Natural killer cell (primary cell): ENCODE measurements at regions of chr1 and their contacts with region 1.

Region 1: GRCh38 chr1:231866392-231867331 is 240.1 kb downstream of the DISC1 start:
- DNase-seq: peak; percentile 43 to 83
- ATAC-seq: peak; percentile 59 to 72 (median 61)
- H3K4me3 ChIP-seq: no peak overlapping the region
- H3K4me3 Mint-ChIP-seq: no peak overlapping the region
- H3K27ac ChIP-seq: no peak overlapping the region
- H3K27ac Mint-ChIP-seq: peak overlapping the region in 1 of 2 donors; percentile 11
- H3K4me1 ChIP-seq: peaks cover 17% of the 10 kb centered on the region
- H3K4me1 Mint-ChIP-seq: peaks cover 34 to 40% of the 10 kb centered on the region in 2 donors
- H3K27me3 ChIP-seq: no peaks in the 10 kb centered on the region
- H3K27me3 Mint-ChIP-seq: no peaks in the 10 kb centered on the region
- CTCF ChIP-seq: peak; percentile 95

Region 2: DNA sequence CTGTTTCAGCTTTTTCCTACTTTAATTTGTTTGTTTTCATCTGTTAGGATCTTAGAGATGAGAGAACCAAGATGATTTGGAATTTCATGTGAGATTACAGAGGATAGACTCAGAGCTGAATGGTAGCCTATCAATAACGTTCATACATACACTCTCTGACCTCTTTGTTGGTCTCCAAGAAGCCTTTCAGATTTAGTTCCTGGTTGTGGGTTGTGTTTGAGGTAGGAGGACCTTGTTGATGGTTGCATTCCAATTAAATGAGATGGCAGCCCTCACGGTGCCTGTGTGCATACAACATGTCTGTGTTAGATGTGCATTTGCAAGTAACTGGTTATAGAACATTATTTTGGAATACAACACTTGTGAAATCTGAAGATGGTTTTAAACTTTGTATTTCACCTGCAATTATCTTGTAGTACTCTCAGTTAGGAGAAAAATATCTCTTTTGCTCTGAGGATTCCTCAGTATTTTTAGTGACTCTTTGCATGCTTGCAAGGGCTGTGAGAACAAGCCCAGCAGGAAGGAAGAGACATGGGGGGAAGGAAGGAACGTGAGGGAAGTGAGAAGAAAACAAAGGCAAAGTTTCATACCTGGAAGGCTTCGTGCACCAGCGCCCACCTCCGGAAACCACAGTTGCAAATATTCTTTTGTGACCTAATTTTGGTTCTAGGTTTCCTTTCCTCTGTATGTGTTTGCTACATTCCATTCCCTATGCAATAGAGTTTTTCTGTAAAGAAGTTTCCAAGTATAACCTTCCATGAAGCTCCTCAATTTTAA is 51.8 kb after region 1 on chr1:
- intact Hi-C with region 1: loop called (anchors 5 kb)
- DNase-seq: peak in 1 of 2 donors; percentile 63
- ATAC-seq: peak in 1 of 3 donors; percentile 12
- H3K4me3 ChIP-seq: no peak overlapping the region
- H3K4me3 Mint-ChIP-seq: peak overlapping the region; percentile 85
- H3K27ac ChIP-seq: peak overlapping the region; percentile 73
- H3K27ac Mint-ChIP-seq: peak overlapping the region; percentile 88 to 92
- H3K4me1 ChIP-seq: peaks cover 50% of the 10 kb centered on the region
- H3K4me1 Mint-ChIP-seq: peaks cover 52 to 62% of the 10 kb centered on the region in 2 donors
- H3K27me3 ChIP-seq: no peaks in the 10 kb centered on the region
- H3K27me3 Mint-ChIP-seq: no peaks in the 10 kb centered on the region
- CTCF ChIP-seq: no peak

Region 3: DNA sequence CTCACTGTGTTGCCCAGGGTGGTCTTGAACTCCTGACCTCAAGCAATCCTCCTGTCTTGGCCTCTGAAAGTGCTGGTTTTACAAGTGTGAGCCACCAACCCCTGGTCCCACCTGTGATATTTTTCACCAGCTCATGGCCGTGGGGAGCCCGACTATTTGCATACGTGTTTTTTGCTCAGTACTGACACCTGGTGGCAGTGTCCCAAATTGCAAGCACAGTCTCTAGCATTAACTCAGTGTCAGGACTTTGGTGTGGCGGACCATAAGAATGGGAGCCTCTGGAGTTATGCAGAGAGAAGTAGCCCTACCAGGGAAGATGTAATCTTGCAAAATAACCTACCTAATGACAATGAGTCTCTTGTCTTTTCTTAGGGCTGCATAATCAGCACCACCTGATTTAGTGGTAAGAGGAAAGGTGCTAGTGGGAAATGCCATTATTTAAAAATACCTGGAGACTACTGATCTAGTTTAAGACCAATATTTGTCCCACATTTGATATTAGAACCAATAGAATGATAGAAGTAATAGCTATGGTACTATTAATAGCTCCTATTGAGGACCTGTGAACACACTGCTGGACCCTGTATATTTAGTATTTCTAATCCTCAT is 65.3 kb after region 1 on chr1:
- intact Hi-C with region 1: loop called (anchors 5 kb)
- DNase-seq: peak; percentile 31 to 63
- ATAC-seq: peak in 1 of 3 donors; percentile 67
- H3K4me3 ChIP-seq: no peak overlapping the region
- H3K4me3 Mint-ChIP-seq: no peak overlapping the region
- H3K27ac ChIP-seq: no peak overlapping the region
- H3K27ac Mint-ChIP-seq: no peak overlapping the region
- H3K4me1 ChIP-seq: peaks cover 4% of the 10 kb centered on the region
- H3K4me1 Mint-ChIP-seq: peaks cover 8 to 9% of the 10 kb centered on the region in 2 donors
- H3K27me3 ChIP-seq: no peaks in the 10 kb centered on the region
- H3K27me3 Mint-ChIP-seq: no peaks in the 10 kb centered on the region
- CTCF ChIP-seq: peak; percentile 75

Region 4: GRCh38 chr1:231971397-231972104 is 104.9 kb after region 1 on chr1:
- intact Hi-C with region 1: loop called (anchors 10 kb)
- DNase-seq: no peak
- ATAC-seq: peak in 2 of 3 donors; percentile 46 to 53
- H3K4me3 ChIP-seq: no peak overlapping the region
- H3K4me3 Mint-ChIP-seq: peak overlapping the region; percentile 43
- H3K27ac ChIP-seq: no peak overlapping the region
- H3K27ac Mint-ChIP-seq: peak overlapping the region in 1 of 2 donors; percentile 10
- H3K4me1 ChIP-seq: peaks cover 12% of the 10 kb centered on the region
- H3K4me1 Mint-ChIP-seq: peaks cover 19 to 38% of the 10 kb centered on the region in 2 donors
- H3K27me3 ChIP-seq: no peaks in the 10 kb centered on the region
- H3K27me3 Mint-ChIP-seq: no peaks in the 10 kb centered on the region
- CTCF ChIP-seq: no peak

Region 5: DNA sequence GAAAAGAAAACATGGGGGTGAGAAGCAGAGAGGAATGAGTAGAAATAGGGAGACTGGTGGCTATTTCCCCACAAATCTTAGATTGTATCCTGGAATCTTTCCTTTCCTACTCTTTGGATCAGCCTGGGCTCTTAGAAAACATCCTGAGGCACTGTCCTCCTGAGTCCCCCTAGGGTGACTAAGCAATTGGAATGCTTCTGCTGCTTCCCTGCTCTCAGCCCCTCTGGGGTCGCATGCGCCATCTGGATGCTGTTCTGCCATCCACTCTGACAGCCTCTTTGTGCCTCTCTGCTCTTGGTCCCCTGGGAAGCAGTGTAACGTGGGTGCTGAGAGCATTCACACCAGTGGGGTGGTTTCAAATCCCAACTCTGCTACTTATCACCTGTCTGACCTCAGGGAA is 320.3 kb after region 1 on chr1:
- intact Hi-C with region 1: loop called (anchors 10 kb)
- DNase-seq: no peak
- ATAC-seq: no peak
- H3K4me3 ChIP-seq: no peak overlapping the region
- H3K4me3 Mint-ChIP-seq: no peak overlapping the region
- H3K27ac ChIP-seq: no peak overlapping the region
- H3K27ac Mint-ChIP-seq: no peak overlapping the region
- H3K4me1 ChIP-seq: no peaks in the 10 kb centered on the region
- H3K4me1 Mint-ChIP-seq: no peaks in the 10 kb centered on the region
- H3K27me3 ChIP-seq: no peaks in the 10 kb centered on the region
- H3K27me3 Mint-ChIP-seq: peaks cover 10 to 15% of the 10 kb centered on the region in 2 donors
- CTCF ChIP-seq: no peak

Region 6: DNA sequence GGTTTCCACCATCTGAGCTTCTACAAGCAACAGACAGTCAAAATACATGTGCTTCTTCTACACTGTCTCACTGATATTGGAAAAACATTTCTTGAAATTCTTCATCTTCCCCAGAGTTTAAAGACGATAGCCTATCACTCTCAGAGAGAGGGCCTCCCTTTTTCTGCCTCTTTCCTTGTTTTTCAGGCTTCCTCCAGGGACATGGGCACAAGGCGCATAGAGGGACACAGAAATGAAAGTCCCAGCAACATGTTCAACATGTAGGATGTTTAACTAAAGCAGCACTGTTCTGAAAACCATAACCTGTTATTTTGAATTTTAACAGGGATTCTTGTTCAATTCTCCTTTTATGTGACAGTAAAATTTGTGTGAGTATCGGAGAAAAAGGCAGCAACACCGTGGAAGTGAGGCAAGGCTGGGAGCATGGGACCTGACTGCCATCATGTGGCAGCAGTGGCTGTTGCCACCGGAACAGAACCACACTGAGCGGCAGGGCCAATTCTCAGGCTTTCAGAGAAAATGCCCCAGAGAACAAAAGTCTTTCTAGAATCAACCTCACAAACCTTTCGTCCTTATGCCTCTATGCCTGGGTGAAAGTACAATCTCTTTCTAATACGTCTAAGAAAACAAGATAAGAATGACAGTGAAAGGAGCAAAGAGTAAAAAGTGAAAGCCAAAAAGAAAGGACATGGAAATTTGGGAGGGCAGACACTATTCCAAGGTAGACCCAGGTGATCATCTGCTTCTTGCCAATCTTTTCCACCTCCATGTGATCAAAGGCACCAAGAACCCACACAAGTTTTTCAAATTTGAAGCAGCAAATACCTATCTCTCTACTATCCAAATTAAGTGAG is 1374.4 kb after region 1 on chr1:
- intact Hi-C with region 1: loop called (anchors 10 kb)
- DNase-seq: peak in 1 of 2 donors; percentile 46
- ATAC-seq: peak in 2 of 3 donors; percentile 68 to 69
- H3K4me3 ChIP-seq: no peak overlapping the region
- H3K4me3 Mint-ChIP-seq: no peak overlapping the region
- H3K27ac ChIP-seq: no peak overlapping the region
- H3K27ac Mint-ChIP-seq: no peak overlapping the region
- H3K4me1 ChIP-seq: no peaks in the 10 kb centered on the region
- H3K4me1 Mint-ChIP-seq: peaks cover 0 to 11% of the 10 kb centered on the region in 2 donors
- H3K27me3 ChIP-seq: no peaks in the 10 kb centered on the region
- H3K27me3 Mint-ChIP-seq: no peaks in the 10 kb centered on the region
- CTCF ChIP-seq: no peak